ENCODE measurements at regions of chr2 and their contacts with region 1.

Region 1: DNA sequence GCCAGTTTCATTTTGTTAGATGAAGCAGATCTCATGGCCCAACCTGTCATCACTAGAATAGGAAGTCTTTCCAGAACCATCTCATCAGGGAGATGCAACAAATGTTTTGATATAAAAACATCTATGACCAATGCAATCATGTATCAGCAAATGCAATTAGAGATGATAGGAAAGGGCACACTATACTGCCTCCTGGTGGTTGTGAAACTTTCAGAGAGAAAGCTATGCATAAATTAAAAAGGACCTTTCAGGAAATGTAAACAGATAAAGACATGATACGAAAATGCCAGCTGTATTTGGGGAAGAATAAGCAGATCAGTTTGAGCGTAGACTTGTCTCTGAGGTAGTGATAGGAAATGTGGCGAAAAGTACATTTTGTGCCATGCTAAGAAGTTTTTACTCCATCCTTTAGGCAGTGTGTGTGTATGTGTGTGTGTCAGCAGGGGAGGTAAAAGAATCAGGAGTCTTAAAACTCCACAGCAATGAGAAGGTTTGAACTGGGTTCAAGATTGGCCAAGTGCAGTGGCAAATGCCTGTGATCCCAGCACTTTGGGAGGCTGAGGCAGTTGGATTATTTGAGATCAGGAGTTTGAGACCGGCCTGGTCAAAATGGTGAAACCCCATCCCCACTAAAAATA is 479.3 kb downstream of the CPS1 start:
- DNase-seq: peak; percentile 64
- H3K4me3 ChIP-seq: no peak overlapping the region
- H3K27ac ChIP-seq: no peak overlapping the region
- H3K4me1 ChIP-seq: no peaks in the 10 kb centered on the region
- H3K27me3 ChIP-seq: no peaks in the 10 kb centered on the region
- CTCF ChIP-seq: peak; percentile 81

Region 2: DNA sequence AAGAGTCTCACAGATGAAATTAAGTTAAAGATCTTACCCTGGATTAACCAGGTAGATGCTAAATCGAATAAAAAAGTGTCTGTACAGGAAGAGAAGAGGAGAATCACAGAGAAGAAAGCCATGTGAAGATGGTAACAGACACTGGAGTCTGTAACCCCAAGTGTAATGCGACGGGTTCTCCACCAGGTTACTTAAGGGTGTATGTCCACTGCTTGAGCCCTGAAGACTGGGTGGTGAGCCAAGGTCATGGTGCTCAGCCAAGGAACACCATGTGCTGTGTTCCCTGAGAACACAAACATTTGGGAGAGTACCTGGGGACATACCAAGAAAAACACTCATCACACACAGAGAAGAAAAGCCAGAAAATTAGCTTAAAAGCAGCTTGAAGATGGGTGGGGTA is 802.2 kb before region 1 on chr2:
- CTCF ChIA-PET with region 1: no interaction called
- POLR2A ChIA-PET with region 1: no interaction called
- intact Hi-C with region 1: loop called (anchors 10 kb)
- DNase-seq: no peak
- H3K4me3 ChIP-seq: no peak overlapping the region
- H3K27ac ChIP-seq: no peak overlapping the region
- H3K4me1 ChIP-seq: no peaks in the 10 kb centered on the region
- H3K27me3 ChIP-seq: no peaks in the 10 kb centered on the region
- CTCF ChIP-seq: no peak

Region 3: GRCh38 chr2:210617732-210618330 is 417.8 kb before region 1 on chr2:
- CTCF ChIA-PET with region 1: no interaction called
- POLR2A ChIA-PET with region 1: no interaction called
- intact Hi-C with region 1: loop called (anchors 5 kb)
- DNase-seq: peak; percentile 66
- H3K4me3 ChIP-seq: no peak overlapping the region
- H3K27ac ChIP-seq: no peak overlapping the region
- H3K4me1 ChIP-seq: peaks cover 5% of the 10 kb centered on the region
- H3K27me3 ChIP-seq: no peaks in the 10 kb centered on the region
- CTCF ChIP-seq: peak; percentile 80

Region 4: GRCh38 chr2:210663631-210664089 is 372.0 kb before region 1 on chr2:
- CTCF ChIA-PET with region 1: interaction called, 3 read pairs
- POLR2A ChIA-PET with region 1: no interaction called
- intact Hi-C with region 1: loop called (anchors 5 kb)
- DNase-seq: peak; percentile 54
- H3K4me3 ChIP-seq: no peak overlapping the region
- H3K27ac ChIP-seq: no peak overlapping the region
- H3K4me1 ChIP-seq: no peaks in the 10 kb centered on the region
- H3K27me3 ChIP-seq: no peaks in the 10 kb centered on the region
- CTCF ChIP-seq: peak; percentile 56

Region 5: GRCh38 chr2:211259831-211260476 is 224.3 kb after region 1 on chr2:
- CTCF ChIA-PET with region 1: no interaction called
- POLR2A ChIA-PET with region 1: no interaction called
- intact Hi-C with region 1: loop called (anchors 10 kb)
- DNase-seq: peak; percentile 96
- H3K4me3 ChIP-seq: no peak overlapping the region
- H3K27ac ChIP-seq: peak overlapping the region; percentile 100
- H3K4me1 ChIP-seq: peaks cover 21% of the 10 kb centered on the region
- H3K27me3 ChIP-seq: no peaks in the 10 kb centered on the region
- CTCF ChIP-seq: no peak

Region 6: DNA sequence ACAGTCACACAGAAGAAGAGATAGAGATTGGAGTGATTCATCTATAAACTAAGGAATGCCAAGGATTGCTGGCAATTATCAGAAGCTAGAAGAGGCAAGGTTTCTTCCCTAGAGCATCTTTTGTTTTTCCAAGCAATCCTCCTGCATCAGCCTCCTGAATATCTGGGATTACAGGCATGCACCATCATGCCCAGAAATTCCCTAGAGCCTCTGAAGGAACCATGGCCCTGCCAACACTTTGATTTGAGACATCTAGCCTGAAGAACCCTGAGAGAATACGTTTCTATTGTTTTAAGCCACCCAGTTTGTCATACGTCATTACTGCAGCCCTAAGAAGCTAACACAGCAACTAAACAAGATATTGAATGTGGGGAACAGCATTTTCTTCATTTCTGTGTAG is 978.0 kb after region 1 on chr2:
- CTCF ChIA-PET with region 1: no interaction called
- POLR2A ChIA-PET with region 1: no interaction called
- intact Hi-C with region 1: no loop called
- DNase-seq: no peak
- H3K4me3 ChIP-seq: no peak overlapping the region
- H3K27ac ChIP-seq: no peak overlapping the region
- H3K4me1 ChIP-seq: no peaks in the 10 kb centered on the region
- H3K27me3 ChIP-seq: no peaks in the 10 kb centered on the region
- CTCF ChIP-seq: no peak